B cell (primary cell): ENCODE measurements at regions of chr6 and their contacts with region 1.

Region 1: DNA sequence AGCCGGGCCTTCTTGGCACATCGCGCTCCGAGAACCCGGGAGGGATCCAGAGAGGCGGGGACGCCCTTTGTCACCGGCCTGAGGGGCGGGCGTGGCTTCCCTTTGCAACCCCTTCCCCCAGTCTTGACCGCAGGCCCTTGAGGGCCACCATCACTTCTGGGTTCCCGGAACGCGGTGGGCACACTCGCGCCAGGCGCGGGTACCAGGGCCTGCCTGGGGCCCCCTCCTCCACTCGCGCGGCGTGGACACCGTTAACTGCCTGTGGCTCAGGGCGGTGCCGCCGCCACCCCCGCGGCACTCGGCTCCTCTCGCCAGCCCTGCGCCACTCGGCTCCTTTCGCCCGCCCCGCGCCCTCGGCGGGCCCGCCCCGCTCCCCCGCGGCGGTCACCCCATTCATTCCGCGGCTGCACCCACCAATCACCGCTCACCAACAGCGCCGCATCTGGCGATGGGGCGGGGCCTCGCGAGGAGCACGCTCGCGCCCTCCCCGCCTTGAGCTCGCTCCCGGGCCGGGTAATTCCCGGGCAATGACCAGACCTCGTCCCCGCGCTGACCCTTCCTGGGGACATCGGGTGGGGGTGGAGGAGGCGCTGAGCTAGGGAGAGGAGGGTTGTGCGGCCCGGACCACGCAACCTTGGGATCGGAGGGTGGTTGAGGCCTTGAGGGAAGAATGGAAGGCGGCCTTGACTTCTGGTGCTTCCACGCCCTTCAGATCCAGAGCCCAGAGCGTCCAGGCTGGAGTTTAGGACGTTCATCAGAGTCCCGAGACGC is 10.5 kb upstream of the ELOVL5 start:
- DNase-seq: peak; percentile 94
- ATAC-seq: peak; percentile 90
- H3K4me3 ChIP-seq: peak overlapping the region; percentile 61 to 81 (median 70)
- H3K4me3 Mint-ChIP-seq: peak overlapping the region; percentile 88
- H3K27ac ChIP-seq: peak overlapping the region; percentile 99 to 100
- H3K27ac Mint-ChIP-seq: peak overlapping the region; percentile 99
- H3K4me1 ChIP-seq: peaks cover 46 to 53% of the 10 kb centered on the region in 2 donors
- H3K4me1 Mint-ChIP-seq: peaks cover 51% of the 10 kb centered on the region
- H3K27me3 ChIP-seq: no peaks in the 10 kb centered on the region
- H3K27me3 Mint-ChIP-seq: no peaks in the 10 kb centered on the region
- CTCF ChIP-seq: no peak

Region 2: GRCh38 chr6:52491203-52492069 is 867.8 kb before region 1 on chr6:
- CTCF ChIA-PET with region 1: no interaction called
- POLR2A ChIA-PET with region 1: interaction called, 12 read pairs
- intact Hi-C with region 1: no loop called
- DNase-seq: peak; percentile 65
- ATAC-seq: peak; percentile 59
- H3K4me3 ChIP-seq: peak overlapping the region in 3 of 5 experiments; percentile 3 to 33 (median 27)
- H3K4me3 Mint-ChIP-seq: peak overlapping the region; percentile 79
- H3K27ac ChIP-seq: peak overlapping the region; percentile 72 to 83
- H3K27ac Mint-ChIP-seq: peak overlapping the region; percentile 86
- H3K4me1 ChIP-seq: peaks cover 29 to 62% of the 10 kb centered on the region in 2 donors
- H3K4me1 Mint-ChIP-seq: peaks cover 61% of the 10 kb centered on the region
- H3K27me3 ChIP-seq: no peaks in the 10 kb centered on the region
- H3K27me3 Mint-ChIP-seq: no peaks in the 10 kb centered on the region
- CTCF ChIP-seq: no peak

Region 3: GRCh38 chr6:53335208-53335994 is 23.9 kb before region 1 on chr6:
- CTCF ChIA-PET with region 1: interaction called, 3 read pairs
- POLR2A ChIA-PET with region 1: interaction called, 3 read pairs
- intact Hi-C with region 1: loop called (anchors 1 kb)
- DNase-seq: peak; percentile 93
- ATAC-seq: peak; percentile 88
- H3K4me3 ChIP-seq: peak overlapping the region; percentile 38 to 79 (median 58)
- H3K4me3 Mint-ChIP-seq: peak overlapping the region; percentile 80
- H3K27ac ChIP-seq: peak overlapping the region; percentile 98
- H3K27ac Mint-ChIP-seq: peak overlapping the region; percentile 97
- H3K4me1 ChIP-seq: peaks cover 81 to 89% of the 10 kb centered on the region in 2 donors
- H3K4me1 Mint-ChIP-seq: peaks cover 88% of the 10 kb centered on the region
- H3K27me3 ChIP-seq: no peaks in the 10 kb centered on the region
- H3K27me3 Mint-ChIP-seq: no peaks in the 10 kb centered on the region
- CTCF ChIP-seq: no peak

Region 4: GRCh38 chr6:53342217-53342616 is 17.0 kb before region 1 on chr6:
- CTCF ChIA-PET with region 1: interaction called, 11 read pairs
- POLR2A ChIA-PET with region 1: interaction called, 17 read pairs
- intact Hi-C with region 1: loop called (anchors 2 kb)
- DNase-seq: no peak
- ATAC-seq: peak; percentile 29
- H3K4me3 ChIP-seq: peak overlapping the region in 2 of 5 experiments; percentile 3 to 33
- H3K4me3 Mint-ChIP-seq: peak overlapping the region; percentile 77
- H3K27ac ChIP-seq: peak overlapping the region in 1 of 2 donors; percentile 76
- H3K27ac Mint-ChIP-seq: peak overlapping the region; percentile 89
- H3K4me1 ChIP-seq: peaks cover 88 to 91% of the 10 kb centered on the region in 2 donors
- H3K4me1 Mint-ChIP-seq: peaks cover 94% of the 10 kb centered on the region
- H3K27me3 ChIP-seq: no peaks in the 10 kb centered on the region
- H3K27me3 Mint-ChIP-seq: no peaks in the 10 kb centered on the region
- CTCF ChIP-seq: no peak

Region 5: DNA sequence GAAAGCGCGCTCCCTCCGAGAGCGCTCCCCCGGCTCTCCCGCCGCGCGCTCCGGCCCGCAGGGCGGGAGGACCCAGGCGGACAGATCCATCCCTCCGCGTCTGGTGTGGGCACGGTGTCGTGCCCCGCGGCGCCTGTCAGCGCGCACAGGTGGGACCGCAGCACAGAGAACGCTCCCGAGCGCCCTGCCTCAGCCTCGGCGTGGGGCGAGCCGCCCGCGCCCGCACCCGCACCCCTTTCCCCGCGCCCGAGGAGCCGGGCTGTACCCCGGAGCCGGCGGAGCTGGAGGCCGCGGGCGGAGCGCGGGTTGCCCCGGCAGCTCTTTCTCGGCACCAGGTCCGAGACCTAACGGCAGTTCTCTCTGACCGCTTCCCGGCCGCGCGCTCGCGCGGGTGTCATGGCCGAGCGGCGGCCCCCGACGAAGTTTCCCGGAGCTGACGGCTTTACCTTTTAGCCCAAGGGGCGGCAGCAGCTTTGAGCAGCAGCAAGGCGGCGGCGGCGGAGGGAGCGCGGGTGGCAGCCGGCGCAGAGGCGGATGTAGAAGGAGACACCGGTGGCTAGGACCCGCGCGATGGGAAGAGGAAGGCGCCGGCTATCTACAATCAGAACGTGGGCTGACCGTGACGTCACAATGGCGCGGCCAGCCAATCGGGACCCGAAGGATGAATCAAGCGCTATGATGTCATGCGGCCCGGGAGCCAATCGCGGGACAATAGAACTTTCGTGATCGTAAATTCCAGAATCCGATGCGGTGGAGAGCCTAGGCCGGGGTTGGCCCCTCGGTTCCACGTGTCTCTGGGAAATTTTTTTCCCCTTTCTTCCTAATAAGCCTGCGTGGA is 10.7 kb before region 1 on chr6 and contains the start of gene ELOVL5:
- CTCF ChIA-PET with region 1: interaction called, 11 read pairs
- POLR2A ChIA-PET with region 1: interaction called, 17 read pairs
- intact Hi-C with region 1: loop called (anchors 1 kb)
- DNase-seq: peak; percentile 99
- ATAC-seq: peak; percentile 79
- H3K4me3 ChIP-seq: peak within 1 kb of the TSS; percentile 65 to 97 (median 86)
- H3K4me3 Mint-ChIP-seq: peak within 1 kb of the TSS; percentile 94
- H3K27ac ChIP-seq: peak within 1 kb of the TSS; percentile 84 to 91
- H3K27ac Mint-ChIP-seq: peak within 1 kb of the TSS; percentile 99
- H3K4me1 ChIP-seq: peaks cover 35 to 36% of the 10 kb centered on the region in 2 donors
- H3K4me1 Mint-ChIP-seq: peaks cover 59% of the 10 kb centered on the region
- H3K27me3 ChIP-seq: no peaks in the 10 kb centered on the region
- H3K27me3 Mint-ChIP-seq: no peaks in the 10 kb centered on the region
- CTCF ChIP-seq: no peak
- total RNA-seq, gene ELOVL5: 128 and 134 TPM in 2 replicates

Region 6: DNA sequence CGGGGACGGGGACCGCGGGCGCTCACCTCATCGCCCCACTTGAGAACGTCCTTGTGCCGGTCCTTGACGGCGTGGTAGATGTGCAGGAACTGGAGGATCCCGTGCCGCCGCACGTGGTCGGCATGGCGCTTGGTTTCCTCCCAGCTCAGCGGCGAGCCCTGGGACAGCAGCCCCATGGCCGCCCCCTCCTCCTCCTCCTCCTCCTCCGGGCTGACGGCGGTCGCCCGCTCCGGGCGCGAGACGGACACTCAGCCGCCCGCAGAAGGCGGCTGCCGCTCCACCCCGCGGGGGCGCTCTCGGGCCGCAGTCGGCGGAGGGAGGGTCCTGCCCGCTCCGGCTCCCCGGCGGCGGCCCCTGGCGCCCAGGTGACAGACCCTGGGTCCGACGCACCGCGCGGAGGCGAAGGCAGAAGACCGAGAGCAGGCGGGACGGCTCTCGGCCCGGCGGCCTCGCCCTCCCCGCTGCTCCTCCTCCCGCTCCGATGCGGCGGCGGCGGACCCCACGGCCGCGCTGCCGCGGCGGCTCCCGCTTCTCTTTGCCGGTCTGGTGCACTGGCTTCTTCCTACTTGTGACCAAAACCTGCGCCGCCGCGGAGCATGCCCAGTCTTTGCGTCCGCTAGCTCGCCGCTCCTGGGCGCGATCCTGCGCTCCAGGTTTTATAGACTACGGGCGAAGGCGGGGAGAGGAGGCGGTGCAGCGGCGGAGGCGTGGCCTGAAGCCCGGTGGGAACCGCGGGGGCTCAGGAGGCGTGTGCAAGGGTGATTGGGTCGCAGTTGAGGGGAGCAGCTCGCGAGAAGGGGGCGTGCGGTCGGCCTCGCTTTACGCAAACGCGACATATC is 185.4 kb after region 1 on chr6 and contains the start of gene GCLC:
- CTCF ChIA-PET with region 1: no interaction called
- POLR2A ChIA-PET with region 1: no interaction called
- intact Hi-C with region 1: loop called (anchors 5 kb)
- DNase-seq: peak; percentile 95
- ATAC-seq: peak; percentile 67
- H3K4me3 ChIP-seq: peak within 1 kb of the TSS; percentile 45 to 81 (median 69)
- H3K4me3 Mint-ChIP-seq: peak within 1 kb of the TSS; percentile 97
- H3K27ac ChIP-seq: peak within 1 kb of the TSS in 1 of 2 donors; percentile 68
- H3K27ac Mint-ChIP-seq: peak within 1 kb of the TSS; percentile 93
- H3K4me1 ChIP-seq: peaks cover 22 to 32% of the 10 kb centered on the region in 2 donors
- H3K4me1 Mint-ChIP-seq: peaks cover 52% of the 10 kb centered on the region
- H3K27me3 ChIP-seq: no peaks in the 10 kb centered on the region
- H3K27me3 Mint-ChIP-seq: no peaks in the 10 kb centered on the region
- CTCF ChIP-seq: peak; percentile 81
- total RNA-seq, gene GCLC: 25.8 and 37.8 TPM in 2 replicates

Region 7: GRCh38 chr6:53651764-53652401 is 292.6 kb after region 1 on chr6:
- CTCF ChIA-PET with region 1: interaction called, 4 read pairs
- POLR2A ChIA-PET with region 1: no interaction called
- intact Hi-C with region 1: loop called (anchors 5 kb)
- DNase-seq: peak; percentile 87
- ATAC-seq: peak; percentile 83
- H3K4me3 ChIP-seq: peak overlapping the region; percentile 64 to 96 (median 79)
- H3K4me3 Mint-ChIP-seq: peak overlapping the region; percentile 96
- H3K27ac ChIP-seq: peak overlapping the region; percentile 9 to 51
- H3K27ac Mint-ChIP-seq: peak overlapping the region; percentile 90
- H3K4me1 ChIP-seq: peaks cover 20 to 26% of the 10 kb centered on the region in 2 donors
- H3K4me1 Mint-ChIP-seq: peaks cover 20% of the 10 kb centered on the region
- H3K27me3 ChIP-seq: peaks cover 0 to 6% (median 0%) of the 10 kb centered on the region in 4 experiments
- H3K27me3 Mint-ChIP-seq: no peaks in the 10 kb centered on the region
- CTCF ChIP-seq: peak; percentile 24